ENCODE measurements at regions of chr14 and their contacts with region 1.

Region 1: GRCh38 chr14:74493343-74494261 is at the start of gene ISCA2:
- DNase-seq: peak; percentile 100
- H3K4me3 Mint-ChIP-seq: no peak within 1 kb of the TSS
- H3K27ac Mint-ChIP-seq: peak within 1 kb of the TSS; percentile 93
- H3K4me1 Mint-ChIP-seq: peaks cover 24% of the 10 kb centered on the region
- H3K27me3 Mint-ChIP-seq: peaks cover 3% of the 10 kb centered on the region
- total RNA-seq, gene ISCA2: 20.0 and 20.8 TPM in 2 replicates

Region 2: DNA sequence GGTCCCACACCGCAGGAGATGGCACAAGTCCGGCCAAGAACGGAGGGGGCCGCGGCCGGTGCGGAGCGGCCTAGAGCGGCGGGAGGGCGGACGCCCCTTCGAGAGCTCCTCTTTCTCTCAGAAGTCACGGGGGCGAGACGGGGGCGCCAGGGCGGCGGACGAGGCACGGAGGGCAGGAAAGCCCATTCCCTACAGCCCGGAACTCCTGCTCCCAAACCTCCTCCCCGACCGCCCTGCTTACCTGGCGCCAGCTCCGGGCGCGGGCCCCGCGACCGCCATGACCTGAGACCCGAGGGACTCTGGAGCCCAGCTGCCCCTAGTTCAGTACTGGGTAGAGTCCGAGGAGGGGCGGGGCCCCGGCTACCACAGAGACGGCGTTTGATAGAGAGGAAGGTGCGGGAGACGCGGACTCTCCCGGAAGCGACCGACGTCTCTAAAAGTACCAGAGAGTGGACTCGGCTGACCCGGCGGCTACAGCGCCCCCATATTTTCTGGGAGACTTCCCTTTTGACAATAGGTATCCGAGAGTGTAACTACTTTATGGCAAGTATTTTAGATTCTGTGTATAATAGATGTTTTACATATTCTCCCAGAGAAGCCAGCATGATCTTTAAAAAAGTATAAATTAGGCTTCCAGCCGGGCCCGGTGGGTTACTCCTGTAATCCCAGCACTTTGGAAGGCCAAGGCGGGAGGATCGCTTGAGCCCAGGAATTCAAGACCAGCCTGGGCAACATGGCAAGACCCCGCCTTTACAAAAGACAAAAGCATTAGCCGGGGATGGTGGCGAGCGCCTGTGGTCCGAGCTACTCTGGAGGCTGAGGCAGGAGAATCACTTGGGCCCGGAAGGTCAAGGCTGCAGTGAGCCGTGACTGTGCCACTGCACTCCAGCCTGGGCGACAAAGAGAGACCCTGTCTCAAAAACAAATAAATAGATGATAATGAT is 190.7 kb before region 1 on chr14 and contains the start of gene ABCD4:
- intact Hi-C with region 1: loop called (anchors 2 kb)
- DNase-seq: peak; percentile 96
- H3K4me3 Mint-ChIP-seq: peak within 1 kb of the TSS; percentile 99
- H3K27ac Mint-ChIP-seq: peak within 1 kb of the TSS; percentile 95
- H3K4me1 Mint-ChIP-seq: peaks cover 21% of the 10 kb centered on the region
- H3K27me3 Mint-ChIP-seq: no peaks in the 10 kb centered on the region
- total RNA-seq, gene ABCD4: 42.4 and 42.9 TPM in 2 replicates

Region 3: DNA sequence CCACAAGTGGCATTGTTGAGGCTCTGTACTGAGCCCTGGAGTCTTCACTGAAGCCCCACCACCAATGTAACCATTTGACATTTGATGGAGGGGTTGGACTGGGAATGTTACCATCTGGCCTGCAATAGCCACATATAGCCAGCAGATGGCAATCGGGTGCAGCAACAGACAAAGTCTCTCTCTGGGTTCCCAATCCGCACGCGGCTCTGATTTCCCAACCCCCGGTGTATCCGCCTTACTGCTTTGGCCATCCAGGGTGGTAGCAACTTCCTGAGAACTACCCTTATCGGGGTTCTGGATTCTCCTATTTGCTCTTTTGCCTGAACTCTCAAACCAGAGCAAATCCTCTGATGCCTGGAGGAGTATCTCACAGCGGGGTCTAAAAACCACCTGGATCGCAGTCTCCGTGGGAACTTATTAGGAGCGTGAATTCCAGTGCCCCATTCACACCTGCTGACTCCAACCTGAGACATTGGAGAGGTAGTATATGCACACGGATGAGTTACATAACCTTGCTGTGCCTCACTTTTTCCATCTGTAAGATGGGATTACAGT is 131.2 kb before region 1 on chr14:
- intact Hi-C with region 1: loop called (anchors 1 kb)
- DNase-seq: peak; percentile 89
- H3K4me3 Mint-ChIP-seq: no peak overlapping the region
- H3K27ac Mint-ChIP-seq: no peak overlapping the region
- H3K4me1 Mint-ChIP-seq: no peaks in the 10 kb centered on the region
- H3K27me3 Mint-ChIP-seq: peaks cover 11% of the 10 kb centered on the region

Region 4: DNA sequence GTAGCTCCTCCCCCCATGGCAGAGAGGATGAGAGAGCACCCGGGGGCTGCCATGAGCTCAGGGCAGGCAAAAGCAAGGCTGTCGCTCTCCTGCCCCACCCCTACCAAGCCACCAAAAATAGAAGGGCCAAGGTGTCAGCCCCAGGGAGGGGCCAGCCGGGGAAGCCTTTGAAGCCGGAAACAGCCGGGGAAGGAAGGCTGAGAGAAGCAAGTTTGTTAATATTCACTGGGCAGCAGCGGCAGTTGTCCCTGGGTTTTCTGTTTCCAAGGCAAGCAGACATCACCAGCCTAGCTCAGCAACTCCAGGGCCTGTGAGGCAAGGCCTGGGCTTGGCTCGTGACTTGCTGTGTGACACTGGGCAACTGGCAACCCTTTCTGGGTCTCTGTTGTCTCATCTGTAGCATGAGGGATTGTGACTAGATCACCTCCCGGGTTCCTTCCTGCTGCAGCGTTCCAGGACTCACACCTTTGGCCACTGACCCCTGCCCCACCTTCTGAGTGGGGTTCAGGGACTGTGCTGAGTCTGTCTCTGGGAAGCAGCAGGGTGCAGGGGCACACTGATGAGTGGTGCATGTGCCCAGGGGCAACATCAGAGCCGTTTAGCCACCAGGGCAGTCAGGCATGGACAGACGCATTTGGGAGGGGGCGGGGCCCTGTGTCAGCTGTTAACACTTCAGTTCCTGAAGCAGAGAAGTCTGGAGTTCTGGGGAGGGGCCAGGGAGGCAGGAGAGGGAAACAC is 91.9 kb before region 1 on chr14:
- intact Hi-C with region 1: no loop called
- DNase-seq: peak; percentile 91
- H3K4me3 Mint-ChIP-seq: peak overlapping the region; percentile 72
- H3K27ac Mint-ChIP-seq: peak overlapping the region; percentile 82
- H3K4me1 Mint-ChIP-seq: peaks cover 20% of the 10 kb centered on the region
- H3K27me3 Mint-ChIP-seq: peaks cover 17% of the 10 kb centered on the region